ENCODE measurements at regions of chr3 and their contacts with region 1.

Region 1: GRCh38 chr3:2898591-2899353 is 211.4 kb downstream of the IL5RA start:
- DNase-seq: no peak
- H3K4me3 Mint-ChIP-seq: no peak overlapping the region
- H3K27ac Mint-ChIP-seq: no peak overlapping the region
- H3K4me1 Mint-ChIP-seq: peaks cover 8% of the 10 kb centered on the region
- H3K27me3 Mint-ChIP-seq: no peaks in the 10 kb centered on the region
- CTCF ChIP-seq: no peak

Region 2: DNA sequence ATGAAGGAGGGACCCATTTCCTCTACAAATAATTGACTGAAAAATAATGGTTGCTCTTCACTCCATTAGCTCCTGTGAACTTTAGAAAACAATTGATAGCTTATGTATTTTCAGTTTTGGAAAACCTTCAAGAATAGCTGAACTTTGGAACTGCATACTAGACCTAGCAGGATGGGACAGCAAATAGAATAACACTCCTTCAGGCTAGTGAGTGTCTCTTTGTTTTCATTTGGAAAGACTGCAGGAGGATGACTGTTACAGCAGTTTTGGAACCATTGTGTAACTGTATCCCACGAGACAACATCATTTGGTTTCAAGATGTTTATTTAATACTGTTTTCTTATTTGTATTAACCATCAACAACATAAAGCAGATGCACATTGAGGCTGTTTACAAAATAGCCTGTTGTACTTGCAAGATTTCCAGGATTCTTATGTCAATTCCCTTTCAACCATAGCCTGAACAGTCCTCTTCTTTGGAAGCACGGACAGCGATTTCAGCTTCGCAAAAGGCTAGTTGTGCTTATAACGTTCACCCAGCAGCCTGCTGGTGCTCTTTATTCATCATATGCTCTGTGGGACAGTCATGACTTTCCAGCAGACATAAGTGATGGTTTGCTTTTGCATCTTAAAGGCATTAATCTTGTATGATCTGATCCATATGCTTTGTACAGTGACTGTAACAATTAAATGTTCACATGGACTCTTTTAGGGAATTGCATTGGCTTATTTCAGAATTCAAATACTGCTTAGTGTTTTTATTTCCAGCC is 124.1 kb before region 1 on chr3:
- CTCF ChIA-PET with region 1: no interaction called
- intact Hi-C with region 1: loop called (anchors 5 kb)
- DNase-seq: no peak
- H3K4me3 Mint-ChIP-seq: no peak overlapping the region
- H3K27ac Mint-ChIP-seq: no peak overlapping the region
- H3K4me1 Mint-ChIP-seq: no peaks in the 10 kb centered on the region
- H3K27me3 Mint-ChIP-seq: no peaks in the 10 kb centered on the region
- CTCF ChIP-seq: no peak

Region 3: DNA sequence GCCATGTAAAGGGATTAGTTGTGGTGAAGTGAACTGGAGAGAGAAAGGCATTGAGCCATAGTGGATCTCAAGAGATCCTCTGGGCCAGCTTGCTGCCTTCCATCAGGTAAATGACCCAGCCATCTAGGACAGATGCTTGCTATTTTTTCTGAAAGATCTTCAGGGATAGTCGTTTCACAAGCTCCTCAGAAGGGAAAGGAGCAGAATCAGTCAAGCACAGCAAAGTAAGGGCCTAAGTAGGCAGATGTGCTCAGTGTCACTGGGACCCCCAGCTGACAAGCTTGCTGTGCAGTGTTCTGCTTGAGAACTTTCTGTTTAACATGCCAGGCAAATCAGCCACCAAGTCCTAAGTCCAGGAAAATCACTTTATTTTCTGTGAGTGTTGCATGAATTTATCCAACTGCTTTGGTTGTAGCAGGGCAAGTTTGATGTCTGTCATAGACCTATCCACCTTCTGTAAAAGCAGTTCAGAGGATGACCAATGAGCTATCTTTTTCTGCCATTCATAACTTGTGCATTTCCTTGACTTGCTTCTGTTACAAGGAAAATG is 108.4 kb before region 1 on chr3:
- CTCF ChIA-PET with region 1: no interaction called
- intact Hi-C with region 1: no loop called
- DNase-seq: no peak
- H3K4me3 Mint-ChIP-seq: no peak overlapping the region
- H3K27ac Mint-ChIP-seq: no peak overlapping the region
- H3K4me1 Mint-ChIP-seq: no peaks in the 10 kb centered on the region
- H3K27me3 Mint-ChIP-seq: no peaks in the 10 kb centered on the region
- CTCF ChIP-seq: no peak

Region 4: DNA sequence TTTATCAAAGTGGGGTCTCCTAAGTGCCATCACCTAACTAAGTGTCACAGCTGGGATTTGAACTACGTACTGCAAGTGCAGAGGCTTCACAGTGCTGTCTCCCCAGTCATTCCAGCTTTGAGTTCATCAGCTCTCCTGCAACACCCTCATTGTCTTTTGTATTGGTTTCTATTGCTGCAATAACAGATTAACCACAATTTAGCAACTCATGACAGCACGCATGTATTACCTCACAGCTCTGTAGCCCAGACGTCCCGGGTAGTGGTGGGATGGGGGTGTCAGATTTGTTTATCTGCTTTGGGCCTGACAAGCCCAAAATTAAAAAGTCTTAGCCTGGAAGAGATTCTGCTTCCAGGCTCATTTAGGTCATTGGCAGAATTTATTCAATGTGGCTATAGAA is 679.9 kb after region 1 on chr3:
- CTCF ChIA-PET with region 1: no interaction called
- intact Hi-C with region 1: no loop called
- DNase-seq: no peak
- H3K4me3 Mint-ChIP-seq: no peak overlapping the region
- H3K27ac Mint-ChIP-seq: no peak overlapping the region
- H3K4me1 Mint-ChIP-seq: no peaks in the 10 kb centered on the region
- H3K27me3 Mint-ChIP-seq: no peaks in the 10 kb centered on the region
- CTCF ChIP-seq: no peak

Measured in Calu3 (cell line).